PC-3 (cell line): ENCODE measurements at regions of chr6 and their contacts with region 1.

Region 1: GRCh38 chr6:126040826-126041225 is 54.5 kb downstream of the TRMT11 start:
- DNase-seq: peak; percentile 75
- ATAC-seq: peak; percentile 95
- H3K4me3 ChIP-seq: peak overlapping the region; percentile 10; the same call in 1 of the 2 replicates
- H3K27ac ChIP-seq: peak overlapping the region; percentile 81
- H3K4me1 ChIP-seq: peaks cover 45% of the 10 kb centered on the region
- H3K27me3 ChIP-seq: no peaks in the 10 kb centered on the region
- CTCF ChIP-seq: no peak

Region 2: GRCh38 chr6:126002755-126003679 is 37.8 kb before region 1 on chr6:
- CTCF ChIA-PET with region 1: no interaction called
- POLR2A ChIA-PET with region 1: no interaction called
- intact Hi-C with region 1: no loop called
- DNase-seq: no peak
- ATAC-seq: no peak
- H3K4me3 ChIP-seq: no peak overlapping the region
- H3K27ac ChIP-seq: no peak overlapping the region
- H3K4me1 ChIP-seq: no peaks in the 10 kb centered on the region
- H3K27me3 ChIP-seq: no peaks in the 10 kb centered on the region
- CTCF ChIP-seq: no peak

Region 3: GRCh38 chr6:126112144-126112632 is 71.4 kb after region 1 on chr6:
- CTCF ChIA-PET with region 1: no interaction called
- POLR2A ChIA-PET with region 1: no interaction called
- intact Hi-C with region 1: loop called (anchors 2 kb)
- DNase-seq: peak; percentile 83
- ATAC-seq: peak; percentile 100
- H3K4me3 ChIP-seq: no peak overlapping the region
- H3K27ac ChIP-seq: no peak overlapping the region
- H3K4me1 ChIP-seq: peaks cover 14% of the 10 kb centered on the region
- H3K27me3 ChIP-seq: no peaks in the 10 kb centered on the region
- CTCF ChIP-seq: peak; percentile 33; the same call in 1 of the 2 replicates